ENCODE measurements at regions of chr9 and their contacts with region 1.

Region 1: DNA sequence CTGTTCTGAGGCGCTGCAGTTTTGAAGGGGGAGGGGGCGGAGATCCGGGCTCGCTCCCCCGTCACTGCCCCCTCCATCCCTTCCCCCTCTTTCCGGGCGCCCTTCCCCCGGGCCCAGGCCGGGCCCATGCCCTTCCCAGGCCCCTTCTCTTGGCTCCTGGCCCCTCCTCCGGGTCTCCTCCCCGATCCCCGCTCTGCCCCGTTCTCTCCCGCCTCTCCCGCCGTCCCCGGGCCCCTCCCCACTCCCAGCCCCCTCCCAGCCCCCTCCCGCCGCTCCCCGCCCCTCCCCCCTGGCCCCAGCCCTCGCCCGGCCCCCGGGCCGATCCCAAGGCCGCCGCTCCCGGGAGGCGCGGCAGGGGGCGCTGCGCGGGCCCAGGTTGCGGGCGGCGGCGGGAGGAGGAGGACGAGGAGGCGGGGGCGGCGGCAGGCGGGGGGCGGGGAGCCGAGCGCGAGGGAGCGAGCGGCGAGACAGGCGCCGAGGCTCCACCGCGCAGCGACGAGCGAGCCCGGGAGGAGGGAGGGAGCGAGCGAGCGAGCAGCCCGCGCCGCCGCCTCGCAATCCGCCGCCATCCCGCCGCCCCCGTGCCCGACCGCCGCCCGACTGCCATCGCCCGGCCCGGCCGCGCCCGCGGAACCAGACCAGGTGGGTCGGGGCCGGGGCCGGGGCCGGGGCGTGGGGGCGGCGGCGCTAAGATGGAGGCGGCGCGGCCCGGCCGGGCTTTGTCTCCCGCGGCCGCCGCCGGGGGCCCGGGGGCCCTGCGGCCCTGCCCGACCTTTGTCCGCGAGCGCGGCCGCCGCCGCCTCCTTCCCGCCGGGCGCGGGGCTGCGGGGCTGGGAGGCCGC is at the start of gene PRRC2B:
- DNase-seq: peak; percentile 71 to 90 (median 85)
- ATAC-seq: peak; percentile 75
- H3K4me3 ChIP-seq: peak within 1 kb of the TSS; percentile 69
- H3K4me3 Mint-ChIP-seq: peak within 1 kb of the TSS; percentile 87 to 99 (median 94)
- H3K27ac ChIP-seq: peak within 1 kb of the TSS; percentile 93
- H3K27ac Mint-ChIP-seq: peak within 1 kb of the TSS; percentile 92 to 99 (median 98)
- H3K4me1 ChIP-seq: peaks cover 44 to 45% of the 10 kb centered on the region in 2 donors
- H3K4me1 Mint-ChIP-seq: peaks cover 42 to 50% (median 49%) of the 10 kb centered on the region in 7 donors
- H3K27me3 ChIP-seq: no peaks in the 10 kb centered on the region
- H3K27me3 Mint-ChIP-seq: peaks cover 0 to 18% (median 0%) of the 10 kb centered on the region in 5 donors
- total RNA-seq, gene PRRC2B: 208 to 382 (median 272) TPM

Region 2: GRCh38 chr9:130042833-130043653 is 1350.8 kb before region 1 on chr9 and contains the start of gene FNBP1:
- CTCF ChIA-PET with region 1: no interaction called
- POLR2A ChIA-PET with region 1: no interaction called
- intact Hi-C with region 1: loop called in 1 of 2 experiments (anchors 5 kb)
- DNase-seq: peak; percentile 75 to 89 (median 84)
- ATAC-seq: peak; percentile 87
- H3K4me3 ChIP-seq: peak within 1 kb of the TSS; percentile 89
- H3K4me3 Mint-ChIP-seq: peak within 1 kb of the TSS; percentile 94 to 100 (median 99)
- H3K27ac ChIP-seq: peak within 1 kb of the TSS; percentile 96
- H3K27ac Mint-ChIP-seq: peak within 1 kb of the TSS; percentile 96 to 99 (median 98)
- H3K4me1 ChIP-seq: peaks cover 31 to 36% of the 10 kb centered on the region in 2 donors
- H3K4me1 Mint-ChIP-seq: peaks cover 32 to 68% (median 53%) of the 10 kb centered on the region in 7 donors
- H3K27me3 ChIP-seq: no peaks in the 10 kb centered on the region
- H3K27me3 Mint-ChIP-seq: peaks cover 0 to 5% (median 0%) of the 10 kb centered on the region in 5 donors
- total RNA-seq, gene FNBP1: 160 to 207 (median 174) TPM

Region 3: GRCh38 chr9:131349881-131350563 is 43.8 kb before region 1 on chr9:
- CTCF ChIA-PET with region 1: interaction called, 3 read pairs
- POLR2A ChIA-PET with region 1: interaction called, 3 read pairs
- intact Hi-C with region 1: loop called in 1 of 2 experiments (anchors 1 kb)
- DNase-seq: peak; percentile 74 to 87 (median 82)
- ATAC-seq: peak; percentile 99
- H3K4me3 ChIP-seq: no peak overlapping the region
- H3K4me3 Mint-ChIP-seq: peak overlapping the region in 8 of 10 donors; percentile 12 to 80 (median 57)
- H3K27ac ChIP-seq: no peak overlapping the region
- H3K27ac Mint-ChIP-seq: peak overlapping the region in 5 of 9 donors; percentile 65 to 78 (median 70)
- H3K4me1 ChIP-seq: peaks cover 4 to 9% of the 10 kb centered on the region in 2 donors
- H3K4me1 Mint-ChIP-seq: peaks cover 0 to 15% (median 8%) of the 10 kb centered on the region in 7 donors
- H3K27me3 ChIP-seq: no peaks in the 10 kb centered on the region
- H3K27me3 Mint-ChIP-seq: peaks cover 0 to 5% (median 0%) of the 10 kb centered on the region in 5 donors

Region 4: DNA sequence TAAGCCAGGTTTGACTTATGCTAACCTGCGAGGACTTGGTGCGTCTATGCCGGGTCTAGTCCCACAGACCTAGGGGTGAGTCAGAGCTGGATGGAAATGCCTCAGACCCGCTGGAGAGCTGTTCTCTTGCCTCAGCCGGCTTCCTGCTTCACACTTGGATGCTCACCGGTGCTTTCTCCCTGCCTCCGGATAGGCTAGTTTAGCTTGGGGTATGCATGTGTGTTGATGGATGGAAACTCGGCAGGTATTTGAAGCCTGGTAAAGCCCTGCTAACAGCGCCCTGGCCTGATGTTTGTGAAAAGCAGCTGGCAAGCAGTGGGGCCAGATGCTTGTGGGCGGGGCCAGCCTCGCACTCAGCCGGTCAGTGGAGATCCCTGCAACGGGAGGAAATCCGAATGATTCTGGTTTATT is 29.3 kb after region 1 on chr9:
- CTCF ChIA-PET with region 1: no interaction called
- POLR2A ChIA-PET with region 1: interaction called, 4 read pairs
- intact Hi-C with region 1: loop called (anchors 2 kb)
- DNase-seq: no peak
- ATAC-seq: peak; percentile 26
- H3K4me3 ChIP-seq: no peak overlapping the region
- H3K4me3 Mint-ChIP-seq: peak overlapping the region in 7 of 10 donors; percentile 40 to 66 (median 59)
- H3K27ac ChIP-seq: no peak overlapping the region
- H3K27ac Mint-ChIP-seq: peak overlapping the region in 7 of 9 donors; percentile 9 to 87 (median 60)
- H3K4me1 ChIP-seq: peaks cover 25 to 46% of the 10 kb centered on the region in 2 donors
- H3K4me1 Mint-ChIP-seq: peaks cover 54 to 97% (median 73%) of the 10 kb centered on the region in 7 donors
- H3K27me3 ChIP-seq: no peaks in the 10 kb centered on the region
- H3K27me3 Mint-ChIP-seq: no peaks in the 10 kb centered on the region

Region 5: GRCh38 chr9:131502781-131503625 is 109.2 kb after region 1 on chr9 and contains the start of gene POMT1:
- CTCF ChIA-PET with region 1: interaction called, 3 read pairs
- POLR2A ChIA-PET with region 1: no interaction called
- intact Hi-C with region 1: loop called (anchors 1 kb)
- DNase-seq: peak; percentile 85 to 93 (median 90)
- ATAC-seq: peak; percentile 77
- H3K4me3 ChIP-seq: peak within 1 kb of the TSS; percentile 79
- H3K4me3 Mint-ChIP-seq: peak within 1 kb of the TSS; percentile 89 to 99 (median 94)
- H3K27ac ChIP-seq: peak within 1 kb of the TSS; percentile 88
- H3K27ac Mint-ChIP-seq: peak within 1 kb of the TSS; percentile 88 to 98 (median 93)
- H3K4me1 ChIP-seq: peaks cover 41 to 42% of the 10 kb centered on the region in 2 donors
- H3K4me1 Mint-ChIP-seq: peaks cover 51 to 73% (median 60%) of the 10 kb centered on the region in 7 donors
- H3K27me3 ChIP-seq: no peaks in the 10 kb centered on the region
- H3K27me3 Mint-ChIP-seq: no peaks in the 10 kb centered on the region
- total RNA-seq, gene POMT1: 40.0 to 55.8 (median 47.7) TPM

Region 6: DNA sequence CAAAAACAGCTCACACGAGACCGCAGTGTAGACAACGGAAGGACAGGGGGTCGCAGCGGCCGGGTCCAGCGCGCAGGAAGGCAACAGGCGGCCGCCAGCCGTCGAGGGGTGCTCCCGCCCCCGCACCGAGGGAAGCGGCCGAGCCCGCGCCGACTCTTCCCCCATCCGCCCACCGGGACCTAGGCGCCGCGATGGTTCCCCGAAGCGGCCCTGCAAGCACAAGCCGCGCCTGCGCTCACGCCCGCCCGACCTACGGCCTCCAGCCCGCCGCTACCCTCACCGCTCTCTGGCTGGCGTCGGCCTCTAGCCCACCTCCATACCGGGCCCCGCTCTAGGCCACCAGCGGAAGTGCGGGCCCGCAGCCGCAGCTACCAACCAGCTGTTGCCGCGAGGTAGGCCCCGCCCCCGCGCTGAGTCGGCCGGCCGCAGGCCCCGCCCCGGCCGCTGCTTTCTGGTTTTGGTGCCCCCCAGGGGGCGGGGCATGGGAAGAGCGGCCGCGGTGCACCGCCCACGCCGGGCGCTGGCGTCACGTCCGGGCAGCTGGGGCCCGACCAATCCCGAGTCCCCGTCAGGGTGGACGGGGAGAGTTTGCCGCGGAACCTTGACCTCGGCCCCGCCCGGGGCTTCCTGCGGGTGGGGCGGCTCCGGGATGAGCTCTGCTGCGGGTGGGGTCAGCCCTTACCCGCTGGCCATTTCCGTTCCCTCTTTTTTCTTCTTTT is 961.0 kb after region 1 on chr9 and contains the start of gene SETX:
- CTCF ChIA-PET with region 1: no interaction called
- POLR2A ChIA-PET with region 1: no interaction called
- intact Hi-C with region 1: loop called in 1 of 2 experiments (anchors 10 kb)
- DNase-seq: peak; percentile 80 to 96 (median 88)
- ATAC-seq: peak; percentile 95
- H3K4me3 ChIP-seq: peak within 1 kb of the TSS; percentile 96
- H3K4me3 Mint-ChIP-seq: peak within 1 kb of the TSS; percentile 78 to 97 (median 94)
- H3K27ac ChIP-seq: peak within 1 kb of the TSS; percentile 94
- H3K27ac Mint-ChIP-seq: peak within 1 kb of the TSS; percentile 68 to 99 (median 97)
- H3K4me1 ChIP-seq: peaks cover 35 to 39% of the 10 kb centered on the region in 2 donors
- H3K4me1 Mint-ChIP-seq: peaks cover 24 to 48% (median 45%) of the 10 kb centered on the region in 7 donors
- H3K27me3 ChIP-seq: no peaks in the 10 kb centered on the region
- H3K27me3 Mint-ChIP-seq: peaks cover 0 to 3% (median 0%) of the 10 kb centered on the region in 5 donors
- total RNA-seq, gene SETX: 52.0 to 83.2 (median 70.2) TPM

Measured in naive thymus-derived CD4-positive, alpha-beta T cell (primary cell).